ENCODE measurements at regions of chr5 and their contacts with region 1.

Region 1: DNA sequence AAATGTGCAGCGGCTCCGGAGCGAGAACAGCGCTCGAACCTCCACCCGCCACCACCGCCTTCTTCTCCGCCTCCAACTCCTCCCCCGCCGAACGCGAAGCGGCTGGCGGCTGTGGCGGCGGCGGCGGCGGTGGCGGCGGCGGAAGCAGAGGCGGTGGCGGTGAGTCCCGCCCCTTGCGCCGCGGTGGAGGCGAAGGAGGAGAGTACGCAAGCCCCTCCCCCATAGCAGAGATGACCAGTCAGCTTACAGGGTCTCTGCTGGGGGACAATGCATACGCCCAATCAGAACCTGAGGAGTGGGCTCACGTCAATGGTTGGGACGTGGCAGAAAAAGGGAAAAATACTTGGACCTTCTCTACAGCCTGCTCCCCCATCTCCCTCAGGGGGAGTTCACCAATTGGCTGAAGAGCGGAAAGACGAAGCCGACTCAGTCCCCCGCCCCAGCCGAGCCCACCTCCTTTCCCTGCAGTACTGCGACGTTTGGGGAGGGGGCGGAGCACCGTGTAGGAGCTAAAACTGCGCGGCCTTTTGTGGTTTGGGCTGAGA is at the start of gene PJA2:
- DNase-seq: peak; percentile 96
- H3K4me3 Mint-ChIP-seq: peak within 1 kb of the TSS; percentile 100
- H3K27ac Mint-ChIP-seq: peak within 1 kb of the TSS; percentile 100
- H3K4me1 Mint-ChIP-seq: peaks cover 34% of the 10 kb centered on the region
- H3K27me3 Mint-ChIP-seq: no peaks in the 10 kb centered on the region
- total RNA-seq, gene PJA2: 66.1 to 67.1 TPM

Region 2: DNA sequence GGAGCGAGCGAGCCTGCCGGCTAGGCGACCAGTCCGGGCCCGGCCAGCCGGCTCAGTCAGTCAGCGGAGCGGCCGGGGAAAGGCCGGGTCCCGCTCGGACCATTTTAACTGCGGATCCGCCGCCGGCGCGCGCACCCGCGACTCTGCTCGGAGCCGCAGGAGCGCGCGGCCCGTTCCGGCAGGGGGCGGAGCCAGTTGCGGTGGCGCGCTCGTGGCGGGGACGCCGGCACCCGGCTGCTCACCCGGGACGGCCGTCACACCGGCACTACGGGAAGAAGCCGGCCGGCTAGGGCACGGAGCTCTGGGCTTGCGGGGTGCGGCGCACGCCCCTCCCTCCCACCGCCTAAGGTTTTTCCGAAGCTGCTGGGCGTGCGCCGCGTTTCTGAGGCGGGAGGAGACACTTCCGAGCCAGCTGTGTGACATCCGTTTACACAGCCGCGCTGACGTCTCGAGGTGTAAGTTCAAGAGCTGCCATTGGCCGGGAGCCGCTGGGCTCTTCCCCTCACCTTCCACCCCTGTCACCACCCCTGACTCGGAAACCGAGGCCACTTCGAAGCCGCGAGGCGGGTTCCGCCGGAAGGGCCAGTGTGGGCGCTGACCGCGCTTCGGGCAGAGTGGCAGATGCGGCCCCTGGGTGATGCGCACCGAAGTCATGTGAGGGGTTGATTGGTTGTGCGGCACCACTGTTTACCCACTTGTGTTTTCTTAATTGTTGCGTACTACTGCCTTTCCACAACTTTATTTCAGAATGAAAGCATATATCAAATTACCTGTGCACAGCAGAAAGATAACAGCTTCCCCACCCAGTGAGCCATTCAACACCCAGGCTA is 1027.7 kb before region 1 on chr5 and contains the start of gene FBXL17:
- CTCF ChIA-PET with region 1: no interaction called
- POLR2A ChIA-PET with region 1: interaction called, 32 read pairs
- DNase-seq: peak; percentile 94
- H3K4me3 Mint-ChIP-seq: peak within 1 kb of the TSS; percentile 77
- H3K27ac Mint-ChIP-seq: peak within 1 kb of the TSS; percentile 97
- H3K4me1 Mint-ChIP-seq: peaks cover 27% of the 10 kb centered on the region
- H3K27me3 Mint-ChIP-seq: no peaks in the 10 kb centered on the region
- total RNA-seq, gene FBXL17: 9.2 to 10.0 TPM

Measured in activated CD4-positive, alpha-beta memory T cell treated with anti-CD3 and anti-CD28 coated beads, Interleukin-2, amount 10 ng/mL, durations not matched to agents 7 days and 5 days (primary cell).